Activated CD8-positive, alpha-beta T cell treated with anti-CD3 and anti-CD28 coated beads for 36 hours (primary cell): ENCODE measurements at regions of chr22 and their contacts with region 1.

Region 1: GRCh38 chr22:35921777-35922176 is 106.8 kb downstream of the RBFOX2 start:
- DNase-seq: peak; percentile 61
- ATAC-seq: peak; percentile 80
- H3K4me3 Mint-ChIP-seq: no peak overlapping the region
- H3K27ac Mint-ChIP-seq: no peak overlapping the region
- H3K4me1 Mint-ChIP-seq: peaks cover 5% of the 10 kb centered on the region
- H3K27me3 Mint-ChIP-seq: no peaks in the 10 kb centered on the region
- CTCF ChIP-seq: peak; percentile 60

Region 2: GRCh38 chr22:35627264-35628041 is 294.3 kb before region 1 on chr22:
- CTCF ChIA-PET with region 1: interaction called, 10 read pairs
- POLR2A ChIA-PET with region 1: no interaction called
- intact Hi-C with region 1: loop called (anchors 5 kb)
- DNase-seq: peak; percentile 87
- ATAC-seq: peak; percentile 69
- H3K4me3 Mint-ChIP-seq: peak overlapping the region; percentile 78
- H3K27ac Mint-ChIP-seq: peak overlapping the region; percentile 86
- H3K4me1 Mint-ChIP-seq: peaks cover 26% of the 10 kb centered on the region
- H3K27me3 Mint-ChIP-seq: peaks cover 7% of the 10 kb centered on the region
- CTCF ChIP-seq: peak; percentile 58

Region 3: GRCh38 chr22:35894937-35895708 is 26.7 kb before region 1 on chr22:
- CTCF ChIA-PET with region 1: no interaction called
- POLR2A ChIA-PET with region 1: no interaction called
- intact Hi-C with region 1: no loop called
- DNase-seq: no peak
- ATAC-seq: no peak
- H3K4me3 Mint-ChIP-seq: no peak overlapping the region
- H3K27ac Mint-ChIP-seq: no peak overlapping the region
- H3K4me1 Mint-ChIP-seq: peaks cover under 1% of the 10 kb centered on the region
- H3K27me3 Mint-ChIP-seq: peaks cover 2% of the 10 kb centered on the region
- CTCF ChIP-seq: no peak